ENCODE measurements at regions of chr5 and their contacts with region 1.

Region 1: GRCh38 chr5:151051066-151051930 is 29.5 kb downstream of the TNIP1 start:
- DNase-seq: peak; percentile 82 to 88
- H3K4me3 ChIP-seq: no peak overlapping the region
- H3K27ac ChIP-seq: no peak overlapping the region
- H3K4me1 ChIP-seq: no peaks in the 10 kb centered on the region
- H3K27me3 ChIP-seq: no peaks in the 10 kb centered on the region
- CTCF ChIP-seq: peak; percentile 68 to 92 (median 88)
- POLR2A ChIP-seq: no peak

Region 2: GRCh38 chr5:150999704-151000442 is 51.4 kb before region 1 on chr5:
- intact Hi-C with region 1: loop called (anchors 5 kb)
- DNase-seq: peak in 1 of 2 donors; percentile 33
- H3K4me3 ChIP-seq: no peak overlapping the region
- H3K27ac ChIP-seq: no peak overlapping the region
- H3K4me1 ChIP-seq: peaks cover 3 to 6% of the 10 kb centered on the region in 2 donors
- H3K27me3 ChIP-seq: no peaks in the 10 kb centered on the region
- CTCF ChIP-seq: no peak
- POLR2A ChIP-seq: no peak

Region 3: GRCh38 chr5:151020304-151021110 is 30.8 kb before region 1 on chr5 and contains the start of gene GPX3:
- intact Hi-C with region 1: no loop called
- DNase-seq: peak; percentile 86 to 89
- H3K4me3 ChIP-seq: peak within 1 kb of the TSS; percentile 80 to 83
- H3K27ac ChIP-seq: peak within 1 kb of the TSS; percentile 81 to 91
- H3K4me1 ChIP-seq: no peaks in the 10 kb centered on the region
- H3K27me3 ChIP-seq: no peaks in the 10 kb centered on the region
- CTCF ChIP-seq: no peak
- POLR2A ChIP-seq: peak; percentile 81 to 95
- total RNA-seq, gene GPX3: 5.7 to 1,241 (median 263) TPM

Region 4: DNA sequence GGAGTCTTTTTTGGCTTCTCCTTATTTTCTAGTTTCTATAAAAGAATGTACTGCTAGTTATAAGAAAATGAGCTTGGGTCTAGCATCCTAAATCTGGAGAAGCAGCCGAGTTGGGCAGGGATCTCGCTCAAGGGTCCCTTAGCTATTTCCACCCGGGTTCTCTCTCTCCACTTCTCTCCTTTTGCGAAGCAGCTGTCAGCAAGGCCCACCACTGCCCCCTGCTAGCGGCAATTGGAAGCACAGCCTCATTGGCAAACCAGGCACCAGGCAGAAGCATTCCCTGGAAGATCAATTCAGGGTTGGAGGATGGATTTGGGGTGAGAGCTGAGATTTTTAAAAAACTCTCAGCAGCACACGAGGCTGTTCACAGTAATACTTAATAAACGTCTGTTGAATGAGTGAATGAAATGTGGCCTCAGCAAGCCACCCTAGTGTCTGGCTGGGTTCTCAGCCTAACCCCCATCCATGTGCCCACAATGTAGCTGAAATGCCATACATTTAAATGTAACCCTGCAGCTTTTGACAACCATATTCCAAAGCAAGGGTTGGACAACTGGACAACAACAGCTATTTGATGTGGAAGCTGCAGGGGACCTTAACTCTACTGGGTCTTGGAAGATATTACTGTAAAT is 64.1 kb after region 1 on chr5:
- intact Hi-C with region 1: loop called (anchors 2 kb)
- DNase-seq: peak; percentile 77 to 80
- H3K4me3 ChIP-seq: no peak overlapping the region
- H3K27ac ChIP-seq: peak overlapping the region in 1 of 2 donors; percentile 55
- H3K4me1 ChIP-seq: no peaks in the 10 kb centered on the region
- H3K27me3 ChIP-seq: no peaks in the 10 kb centered on the region
- CTCF ChIP-seq: peak; percentile 94 to 97 (median 94)
- POLR2A ChIP-seq: no peak